Thyroid gland (tissue), 4 donors: ENCODE measurements at regions of chr18 and their contacts with region 1.

Region 1: GRCh38 chr18:79975985-79976680 is 11.7 kb downstream of the HSBP1L1 start:
- DNase-seq: no peak
- H3K4me3 ChIP-seq: no peak overlapping the region
- H3K27ac ChIP-seq: no peak overlapping the region
- H3K4me1 ChIP-seq: no peaks in the 10 kb centered on the region
- H3K27me3 ChIP-seq: no peaks in the 10 kb centered on the region
- CTCF ChIP-seq: no peak
- POLR2A ChIP-seq: no peak

Region 2: DNA sequence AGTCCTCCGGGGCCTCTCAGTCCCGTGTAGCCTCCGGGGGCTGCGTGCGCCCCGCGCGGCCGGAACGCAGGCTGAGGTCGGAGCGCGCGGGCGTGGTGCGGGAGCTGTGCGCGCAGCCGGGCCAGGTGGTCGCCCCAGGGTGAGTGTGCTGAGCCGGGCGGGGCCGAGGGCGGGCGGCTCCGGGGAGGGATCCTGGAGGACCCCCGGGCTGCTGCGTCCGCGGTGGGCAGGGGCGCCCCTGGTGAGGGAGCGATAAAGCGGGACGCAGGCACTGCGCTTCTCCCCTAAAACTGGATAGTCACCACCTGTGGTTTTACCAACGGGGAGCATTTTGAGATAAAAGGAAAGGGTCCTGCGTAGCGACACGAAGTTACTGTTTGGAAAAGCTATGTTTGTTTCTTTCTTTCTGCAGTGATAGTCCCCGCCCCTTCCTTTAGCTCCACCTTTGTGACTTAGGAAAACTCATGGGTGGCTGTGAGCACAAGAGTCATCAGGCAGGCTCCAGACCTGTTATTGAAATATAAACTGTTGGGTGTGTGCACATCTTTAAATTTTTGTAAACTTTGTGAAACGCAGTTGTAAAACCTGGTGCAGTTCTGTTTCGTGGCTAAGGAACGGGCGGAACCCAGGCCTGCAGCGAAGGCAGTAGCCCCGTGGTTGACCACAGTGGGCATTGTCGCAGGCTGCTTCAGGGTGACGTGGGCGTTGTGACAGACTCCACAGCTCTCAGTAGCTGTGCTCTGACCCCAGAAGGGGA is 295.8 kb before region 1 on chr18:
- intact Hi-C with region 1: loop called (anchors 10 kb)
- DNase-seq: peak; percentile 65 to 69
- H3K4me3 ChIP-seq: peak overlapping the region; percentile 64 to 96 (median 65)
- H3K27ac ChIP-seq: peak overlapping the region in 2 of 3 donors; percentile 8 to 99
- H3K4me1 ChIP-seq: peaks cover 23 to 33% of the 10 kb centered on the region in 2 donors
- H3K27me3 ChIP-seq: no peaks in the 10 kb centered on the region
- CTCF ChIP-seq: no peak
- POLR2A ChIP-seq: no peak